ENCODE measurements at regions of chr6 and their contacts with region 1.

Region 1: DNA sequence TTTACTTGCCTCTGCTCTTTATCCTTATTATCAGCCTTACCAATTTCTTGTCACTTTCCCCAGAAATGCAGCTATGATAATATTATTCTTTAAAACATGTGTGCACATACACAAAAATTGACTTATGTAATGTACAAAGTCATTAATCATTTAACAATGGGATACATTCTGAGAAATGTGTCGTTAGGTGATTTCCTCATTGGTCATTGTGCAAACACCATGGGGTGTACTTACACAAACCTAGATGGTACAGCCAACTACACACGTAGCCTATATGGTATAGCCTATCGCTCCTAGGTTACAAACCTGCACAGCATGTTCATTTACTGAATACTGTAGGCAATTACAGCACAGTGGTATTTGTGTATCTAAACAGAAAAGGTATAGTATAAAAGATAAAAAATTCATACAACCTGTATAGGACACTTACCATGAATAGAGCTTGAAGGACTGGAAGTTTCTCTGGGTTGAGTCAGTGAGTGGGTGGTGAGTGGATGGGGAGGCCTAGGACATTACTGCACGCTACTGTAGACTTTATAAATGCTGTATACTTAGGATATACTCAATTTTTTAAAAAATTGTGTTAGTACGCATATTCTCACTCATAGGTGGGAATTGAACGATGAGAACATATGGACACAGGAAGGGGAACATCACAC is 56.9 kb downstream of the HIVEP1 start:
- DNase-seq: no peak
- ATAC-seq: no peak

Region 2: GRCh38 chr6:12083763-12084162 is 14.7 kb after region 1 on chr6:
- intact Hi-C with region 1: loop called (anchors 2 kb)
- DNase-seq: no peak
- ATAC-seq: no peak

Region 3: DNA sequence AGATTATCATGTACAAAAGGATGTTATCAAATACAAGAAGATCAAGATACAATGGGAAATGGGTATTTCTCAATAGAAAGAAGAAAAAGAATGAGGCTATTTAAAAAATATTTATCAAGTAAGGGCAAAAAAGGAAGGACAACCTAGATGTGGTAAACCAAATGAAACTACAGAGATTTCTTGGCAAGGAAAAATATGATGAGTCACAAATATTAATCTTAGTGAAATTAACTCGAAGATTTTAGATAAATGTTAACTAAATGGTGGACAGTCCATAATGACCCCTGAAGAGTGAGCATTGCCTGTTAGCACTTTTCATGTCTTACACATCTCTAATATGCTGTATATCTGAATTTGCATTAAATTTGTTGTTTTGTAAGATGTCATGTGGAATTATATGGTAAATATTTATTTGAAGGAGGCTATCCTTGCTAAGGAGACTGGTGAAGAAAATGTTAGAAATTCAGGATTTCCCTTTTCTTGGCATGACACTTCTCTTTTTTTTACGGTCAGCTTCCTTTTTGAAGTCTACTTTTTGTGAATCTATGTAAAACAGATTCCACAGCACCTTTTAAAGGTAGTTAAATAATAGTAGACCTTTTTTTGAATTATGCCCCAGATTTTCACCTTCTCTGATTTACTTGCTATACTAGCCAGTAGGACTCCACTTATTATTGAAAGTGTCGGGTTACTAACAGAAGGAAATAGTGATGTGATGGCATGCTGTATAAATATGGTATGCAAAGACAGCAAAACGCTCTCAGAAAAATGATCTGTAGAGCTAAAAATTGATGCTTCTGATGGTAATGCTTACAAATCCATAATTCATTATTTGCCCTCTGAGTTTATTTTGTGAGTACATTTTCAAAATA is 63.6 kb after region 1 on chr6:
- intact Hi-C with region 1: no loop called
- DNase-seq: no peak
- ATAC-seq: no peak